HEK293 (cell line): ENCODE measurements at regions of chr7 and their contacts with region 1.

Region 1: DNA sequence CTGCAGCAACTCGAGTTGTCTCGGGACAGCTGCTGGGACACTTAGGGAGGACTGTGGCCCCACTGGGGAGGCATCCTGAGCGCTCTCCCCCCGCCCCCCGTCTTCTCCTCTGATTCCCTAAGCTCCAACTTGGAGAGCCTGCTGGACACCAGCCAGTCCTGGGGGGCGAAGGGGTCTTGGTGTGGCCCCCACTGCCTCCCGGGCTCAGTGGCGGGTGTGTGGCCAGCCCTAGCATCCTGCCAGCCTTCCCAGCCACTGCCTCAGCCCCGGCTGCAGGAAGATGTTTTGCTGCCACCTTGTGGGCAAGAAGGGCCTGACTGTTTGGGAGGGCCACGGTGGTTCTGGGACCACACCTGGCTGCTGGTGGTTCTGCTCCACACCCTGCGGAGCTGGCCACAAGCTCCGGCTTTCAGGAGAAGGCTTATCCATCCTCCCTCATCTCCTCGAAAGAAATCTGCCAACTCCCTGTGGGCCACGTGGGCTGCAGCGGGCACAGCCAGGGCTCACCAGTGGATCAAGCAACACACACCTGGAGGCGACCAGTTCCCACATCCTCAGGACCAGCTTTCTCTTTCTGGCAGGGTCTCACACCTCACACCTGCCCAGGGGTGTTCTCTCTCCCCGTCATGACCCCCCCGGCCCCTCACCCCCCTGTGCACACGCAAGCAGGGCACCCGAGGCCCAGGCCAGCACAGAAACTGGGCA is 24.8 kb downstream of the AGAP3 start:
- H3K4me3 ChIP-seq: no peak overlapping the region
- H3K27ac ChIP-seq: no peak overlapping the region
- H3K4me1 ChIP-seq: no peaks in the 10 kb centered on the region
- CTCF ChIP-seq: peak; percentile 90

Region 2: GRCh38 chr7:151017953-151018420 is 93.1 kb before region 1 on chr7:
- CTCF ChIA-PET with region 1: interaction called, 27 read pairs
- POLR2A ChIA-PET with region 1: interaction called, 3 read pairs
- H3K4me3 ChIP-seq: no peak overlapping the region
- H3K27ac ChIP-seq: no peak overlapping the region; the same call in 1 of the 2 replicates
- H3K4me1 ChIP-seq: no peaks in the 10 kb centered on the region
- CTCF ChIP-seq: peak; percentile 97

Region 3: DNA sequence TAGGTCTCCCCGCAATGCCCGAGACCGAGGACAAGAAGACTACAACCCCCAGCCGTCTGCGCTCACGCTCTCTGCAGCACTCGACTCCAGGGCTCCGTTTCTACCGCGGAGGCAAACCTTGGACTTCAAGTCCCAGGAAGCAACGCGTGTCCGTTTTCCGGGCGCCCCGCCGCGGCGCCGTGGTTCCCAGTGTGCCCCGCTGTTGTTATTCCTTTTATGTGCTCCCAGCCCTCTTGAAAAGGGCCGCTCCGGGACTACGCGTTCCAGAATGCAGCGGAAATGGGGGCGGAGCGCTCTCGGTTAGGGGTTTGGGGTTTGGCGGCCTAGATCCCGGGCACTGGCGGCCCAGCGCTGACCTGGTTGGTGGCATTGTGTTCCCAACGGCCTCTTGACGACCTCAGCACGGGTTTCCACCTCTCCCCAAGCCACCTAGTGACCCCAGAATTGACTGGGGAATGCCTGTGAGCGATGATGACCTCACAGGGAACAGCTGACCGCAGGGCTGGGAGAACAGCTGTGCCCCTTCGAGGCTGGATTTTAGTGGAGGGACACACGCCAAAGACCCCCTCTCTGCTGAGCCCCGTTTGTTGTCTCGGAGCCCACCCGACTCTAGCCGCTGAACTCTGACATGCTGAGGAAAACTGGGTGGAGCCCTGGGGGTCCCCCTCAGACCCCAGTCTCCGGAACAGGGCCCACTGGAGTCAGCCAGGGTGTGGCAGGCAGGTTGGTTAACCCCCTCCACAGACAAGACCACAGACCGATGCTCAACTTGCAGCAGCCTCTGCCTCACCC is 52.9 kb before region 1 on chr7:
- CTCF ChIA-PET with region 1: interaction called, 14 read pairs
- POLR2A ChIA-PET with region 1: interaction called, 4 read pairs
- H3K4me3 ChIP-seq: peak overlapping the region; percentile 49
- H3K27ac ChIP-seq: peak overlapping the region; percentile 48
- H3K4me1 ChIP-seq: no peaks in the 10 kb centered on the region; the same call in 1 of the 2 replicates
- CTCF ChIP-seq: no peak

Region 4: DNA sequence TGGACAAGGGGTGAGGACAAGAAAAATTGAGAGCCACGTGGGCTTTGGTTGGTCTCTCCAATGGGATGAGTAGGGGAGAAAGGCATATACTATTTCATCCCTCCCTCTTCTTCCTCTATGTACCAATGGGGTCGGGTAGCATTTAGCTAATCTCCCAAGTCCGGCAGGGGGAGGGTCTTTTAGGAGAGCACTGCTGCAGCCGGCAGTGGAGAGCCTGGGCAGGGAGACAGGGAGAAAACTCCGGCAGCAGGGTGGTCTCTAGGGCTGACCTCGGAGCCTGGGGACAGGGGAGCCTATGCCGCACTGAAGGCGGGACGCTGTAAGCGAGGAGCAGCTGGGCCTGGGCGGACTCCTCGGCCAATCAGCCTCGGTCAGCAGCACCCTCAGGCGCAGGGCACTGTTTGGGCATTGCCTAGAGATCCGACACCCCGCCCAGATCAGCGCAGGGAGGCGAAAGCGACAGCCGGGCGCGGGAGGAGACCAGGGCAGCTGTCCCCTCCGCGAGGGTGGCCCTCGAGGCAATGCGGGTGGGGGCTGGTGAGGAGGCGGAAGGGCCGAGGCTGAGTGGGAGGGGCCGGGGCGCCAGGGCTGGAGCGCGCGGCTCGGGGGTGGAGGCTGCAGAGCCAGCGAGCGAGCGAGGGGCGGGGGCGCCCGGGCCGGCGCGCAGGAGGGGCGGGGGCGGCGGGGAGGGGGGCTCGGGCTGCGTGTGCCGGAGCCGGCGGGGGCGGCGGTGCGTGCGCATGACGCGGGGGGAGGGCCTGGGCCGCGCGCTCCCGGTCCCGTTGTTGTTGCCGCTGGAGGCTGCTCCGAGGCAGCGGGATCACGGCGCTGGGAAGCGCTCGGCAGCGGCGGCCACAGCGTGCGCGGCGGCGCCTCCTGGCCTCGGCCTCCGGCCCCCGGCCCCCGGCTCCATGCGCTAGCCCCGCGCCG is 25.1 kb before region 1 on chr7 and contains the start of gene AGAP3:
- CTCF ChIA-PET with region 1: interaction called, 43 read pairs
- POLR2A ChIA-PET with region 1: interaction called, 12 read pairs
- H3K4me3 ChIP-seq: peak within 1 kb of the TSS; percentile 80
- H3K27ac ChIP-seq: peak within 1 kb of the TSS; percentile 82
- H3K4me1 ChIP-seq: peaks cover 7% of the 10 kb centered on the region
- CTCF ChIP-seq: no peak; the same call in 1 of the 2 replicates

Region 5: GRCh38 chr7:151099486-151100211 is 11.4 kb before region 1 on chr7:
- CTCF ChIA-PET with region 1: interaction called, 43 read pairs
- POLR2A ChIA-PET with region 1: no interaction called
- H3K4me3 ChIP-seq: no peak overlapping the region
- H3K27ac ChIP-seq: no peak overlapping the region
- H3K4me1 ChIP-seq: no peaks in the 10 kb centered on the region
- CTCF ChIP-seq: no peak